K562 (cell line): ENCODE measurements at regions of chr2 and their contacts with region 1.

Region 1: DNA sequence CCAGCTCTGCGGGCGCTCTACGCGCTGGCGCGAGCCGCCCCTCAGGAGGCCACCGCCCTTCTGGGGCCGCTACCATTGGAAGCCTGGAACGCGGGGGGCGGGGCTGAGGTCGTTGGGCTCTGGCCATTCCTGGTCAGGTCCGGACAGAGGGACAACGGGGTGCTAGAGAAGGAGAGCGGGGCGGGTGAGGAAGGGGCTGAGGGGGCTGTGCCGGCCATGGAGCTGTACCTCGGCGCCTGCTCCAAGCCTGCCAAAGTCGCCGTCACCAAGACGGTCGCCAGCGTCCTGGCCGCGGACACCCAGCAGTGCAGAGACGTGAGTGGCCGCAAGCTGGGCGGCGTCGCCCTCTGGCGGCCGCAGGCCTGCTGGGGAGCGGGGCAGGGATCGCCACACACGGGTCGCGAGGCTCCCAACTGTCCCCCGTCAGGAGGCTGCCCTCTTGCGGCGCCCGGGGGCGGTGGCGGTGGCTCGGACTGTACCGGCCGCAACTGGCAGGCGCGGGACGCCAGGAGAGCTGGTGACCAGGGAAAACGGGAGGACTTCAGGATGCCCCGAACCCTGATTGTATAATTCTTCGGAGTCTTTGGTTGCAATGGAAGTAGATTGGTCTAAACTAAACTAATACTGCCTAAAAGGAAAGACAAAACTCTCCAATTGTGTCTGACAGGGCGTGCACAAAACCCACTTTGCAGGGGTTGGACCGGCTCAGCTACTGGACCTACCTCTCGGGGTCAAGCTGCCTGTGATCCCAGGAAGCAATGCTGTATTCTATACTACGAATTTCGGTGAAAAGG is at the start of gene FSIP2:
- DNase-seq: peak; percentile 50 to 63 (median 58)
- ATAC-seq: peak; percentile 100
- H3K4me3 ChIP-seq: peak within 1 kb of the TSS; percentile 25; the same call in 1 of the 2 replicates
- H3K27ac ChIP-seq: no peak within 1 kb of the TSS
- H3K4me1 ChIP-seq: peaks cover 0 to 6% of the 10 kb centered on the region in 2 experiments; a peak in 1 of 5 replicates
- H3K27me3 ChIP-seq: no peaks in the 10 kb centered on the region
- CTCF ChIP-seq: peak; percentile 71 to 96 (median 73)
- EP300 ChIP-seq: no peak
- POLR2A ChIP-seq: no peak
- RAD21 ChIP-seq: peak; percentile 77 to 80
- polyA plus RNA-seq, gene FSIP2: 0.01 TPM in 1 of 2 experiments, not detected in the other

Region 2: DNA sequence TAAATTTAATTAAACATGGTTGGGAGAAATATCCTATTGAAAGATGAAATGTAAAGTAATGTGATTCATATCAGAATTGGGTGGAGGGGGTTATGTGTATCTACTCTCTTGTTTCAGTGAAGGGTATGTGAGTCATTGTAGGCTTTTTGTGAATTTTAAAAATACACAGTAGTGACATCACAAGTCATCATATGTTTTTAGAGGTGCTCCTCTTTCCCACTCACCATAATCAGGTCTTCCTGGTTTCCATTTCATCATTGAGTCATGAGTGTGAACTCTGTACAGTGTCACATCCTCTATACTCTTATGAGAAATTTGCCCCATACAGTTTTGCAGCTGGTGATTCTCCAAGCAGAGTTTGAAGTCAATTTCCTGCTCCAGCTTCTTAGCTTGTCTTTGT is 18.5 kb after region 1 on chr2:
- CTCF ChIA-PET with region 1: no interaction called
- POLR2A ChIA-PET with region 1: no interaction called
- in situ Hi-C with region 1: no loop called
- intact Hi-C with region 1: no loop called
- DNase-seq: no peak
- ATAC-seq: no peak
- H3K4me3 ChIP-seq: no peak overlapping the region
- H3K27ac ChIP-seq: no peak overlapping the region
- H3K4me1 ChIP-seq: no peaks in the 10 kb centered on the region
- H3K27me3 ChIP-seq: no peaks in the 10 kb centered on the region
- CTCF ChIP-seq: no peak
- EP300 ChIP-seq: no peak
- POLR2A ChIP-seq: no peak
- RAD21 ChIP-seq: no peak

Region 3: GRCh38 chr2:186771850-186772611 is 1033.2 kb after region 1 on chr2:
- CTCF ChIA-PET with region 1: no interaction called
- POLR2A ChIA-PET with region 1: no interaction called
- in situ Hi-C with region 1: loop called (anchors 10 kb)
- intact Hi-C with region 1: no loop called
- DNase-seq: no peak
- ATAC-seq: no peak
- H3K4me3 ChIP-seq: no peak overlapping the region
- H3K27ac ChIP-seq: no peak overlapping the region
- H3K4me1 ChIP-seq: no peaks in the 10 kb centered on the region
- H3K27me3 ChIP-seq: no peaks in the 10 kb centered on the region
- CTCF ChIP-seq: no peak
- EP300 ChIP-seq: no peak
- POLR2A ChIP-seq: no peak
- RAD21 ChIP-seq: no peak